ENCODE measurements at regions of chr15 and their contacts with region 1.

Region 1: GRCh38 chr15:45522328-45523160 is at the start of gene SLC30A4:
- DNase-seq: peak; percentile 49 to 75 (median 66)
- ATAC-seq: peak; percentile 92
- H3K4me3 ChIP-seq: peak within 1 kb of the TSS; percentile 66
- H3K4me3 Mint-ChIP-seq: peak within 1 kb of the TSS; percentile 93 to 98 (median 94)
- H3K27ac ChIP-seq: peak within 1 kb of the TSS; percentile 64
- H3K27ac Mint-ChIP-seq: peak within 1 kb of the TSS; percentile 79 to 90 (median 85)
- H3K4me1 ChIP-seq: peaks cover 0 to 8% of the 10 kb centered on the region in 2 donors
- H3K4me1 Mint-ChIP-seq: peaks cover 23 to 43% (median 33%) of the 10 kb centered on the region in 7 donors
- H3K27me3 ChIP-seq: no peaks in the 10 kb centered on the region
- H3K27me3 Mint-ChIP-seq: peaks cover 0 to 40% (median 0%) of the 10 kb centered on the region in 5 donors
- total RNA-seq, gene SLC30A4: 2.6 to 4.4 (median 3.0) TPM

Region 2: GRCh38 chr15:45634442-45635190 is 112.1 kb after region 1 on chr15 and contains the start of gene SQOR:
- CTCF ChIA-PET with region 1: no interaction called
- POLR2A ChIA-PET with region 1: no interaction called
- intact Hi-C with region 1: loop called in 1 of 2 experiments (anchors 5 kb)
- DNase-seq: peak; percentile 46 to 78 (median 58)
- ATAC-seq: peak; percentile 72
- H3K4me3 ChIP-seq: peak within 1 kb of the TSS; percentile 84
- H3K4me3 Mint-ChIP-seq: peak within 1 kb of the TSS; percentile 91 to 98 (median 96)
- H3K27ac ChIP-seq: peak within 1 kb of the TSS; percentile 69
- H3K27ac Mint-ChIP-seq: peak within 1 kb of the TSS; percentile 84 to 96 (median 91)
- H3K4me1 ChIP-seq: peaks cover 24 to 27% of the 10 kb centered on the region in 2 donors
- H3K4me1 Mint-ChIP-seq: peaks cover 24 to 46% (median 42%) of the 10 kb centered on the region in 7 donors
- H3K27me3 ChIP-seq: no peaks in the 10 kb centered on the region
- H3K27me3 Mint-ChIP-seq: peaks cover 0 to 13% (median 0%) of the 10 kb centered on the region in 5 donors
- total RNA-seq, gene SQOR: 20.6 to 115 (median 32.6) TPM